Thyroid gland (tissue), 4 donors: ENCODE measurements at regions of chr5 and their contacts with region 1.

Region 1: GRCh38 chr5:140073296-140073695 is 30.2 kb upstream of the NRG2 start:
- DNase-seq: no peak
- H3K4me3 ChIP-seq: no peak overlapping the region
- H3K27ac ChIP-seq: no peak overlapping the region
- H3K4me1 ChIP-seq: no peaks in the 10 kb centered on the region
- H3K27me3 ChIP-seq: no peaks in the 10 kb centered on the region
- CTCF ChIP-seq: peak in 5 of 6 experiments; percentile 26 to 87 (median 62)
- POLR2A ChIP-seq: no peak

Region 2: DNA sequence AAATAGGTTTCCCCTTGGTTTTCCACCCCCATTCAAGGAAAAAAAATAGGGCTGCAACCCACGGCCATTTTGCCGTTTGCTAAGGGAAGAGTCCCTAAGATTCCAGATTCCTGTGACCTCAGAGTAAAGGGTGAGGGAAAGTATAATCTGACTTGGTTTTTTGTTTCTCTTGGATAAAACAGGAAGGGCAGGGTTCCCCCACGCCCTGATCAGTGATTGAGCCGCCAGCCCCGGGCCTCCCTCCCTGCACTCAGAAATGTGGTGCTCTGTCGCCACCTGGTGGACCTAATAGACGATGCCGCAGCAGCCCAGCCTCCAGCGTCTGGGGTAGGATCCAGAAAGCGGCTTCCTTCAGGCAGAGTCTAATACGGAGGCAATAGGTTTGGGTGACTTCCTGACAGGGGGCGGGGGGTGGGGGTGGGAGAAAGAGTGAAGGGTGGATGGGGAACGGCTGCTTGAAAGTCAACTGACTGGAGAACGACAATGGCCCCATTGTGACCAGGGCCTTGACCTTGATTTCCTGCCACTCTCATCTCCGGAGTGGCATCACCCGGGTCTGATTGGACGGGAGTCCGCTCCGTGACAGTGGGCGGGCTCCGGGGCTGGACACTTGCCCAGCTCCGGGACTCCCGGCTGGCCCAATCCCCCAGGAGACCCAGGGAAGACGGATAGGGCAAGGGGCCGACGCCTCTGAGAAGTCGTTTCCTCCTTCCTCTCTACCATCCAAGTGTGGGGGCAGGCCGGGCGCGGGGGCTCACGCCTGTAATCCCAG is 83.9 kb after region 1 on chr5:
- intact Hi-C with region 1: loop called (anchors 5 kb)
- DNase-seq: peak; percentile 86 to 89
- H3K4me3 ChIP-seq: peak overlapping the region in 1 of 3 donors; percentile 21
- H3K27ac ChIP-seq: peak overlapping the region in 2 of 3 donors; percentile 36 to 39
- H3K4me1 ChIP-seq: peaks cover 3 to 10% of the 10 kb centered on the region in 2 donors
- H3K27me3 ChIP-seq: no peaks in the 10 kb centered on the region
- CTCF ChIP-seq: peak; percentile 55 to 93 (median 92)
- POLR2A ChIP-seq: peak in 1 of 2 donors; percentile 7

Region 3: GRCh38 chr5:140357726-140358093 is 284.4 kb after region 1 on chr5:
- intact Hi-C with region 1: loop called (anchors 10 kb)
- DNase-seq: peak; percentile 82 to 85
- H3K4me3 ChIP-seq: no peak overlapping the region
- H3K27ac ChIP-seq: no peak overlapping the region
- H3K4me1 ChIP-seq: peaks cover 0 to 10% of the 10 kb centered on the region in 2 donors
- H3K27me3 ChIP-seq: no peaks in the 10 kb centered on the region
- CTCF ChIP-seq: peak; percentile 77 to 95 (median 86)
- POLR2A ChIP-seq: no peak